ENCODE measurements at regions of chr2 and their contacts with region 1.

Region 1: GRCh38 chr2:127953128-127953718 is 67.5 kb upstream of the AMMECR1L start:
- DNase-seq: peak; percentile 73
- ATAC-seq: peak; percentile 98

Region 2: DNA sequence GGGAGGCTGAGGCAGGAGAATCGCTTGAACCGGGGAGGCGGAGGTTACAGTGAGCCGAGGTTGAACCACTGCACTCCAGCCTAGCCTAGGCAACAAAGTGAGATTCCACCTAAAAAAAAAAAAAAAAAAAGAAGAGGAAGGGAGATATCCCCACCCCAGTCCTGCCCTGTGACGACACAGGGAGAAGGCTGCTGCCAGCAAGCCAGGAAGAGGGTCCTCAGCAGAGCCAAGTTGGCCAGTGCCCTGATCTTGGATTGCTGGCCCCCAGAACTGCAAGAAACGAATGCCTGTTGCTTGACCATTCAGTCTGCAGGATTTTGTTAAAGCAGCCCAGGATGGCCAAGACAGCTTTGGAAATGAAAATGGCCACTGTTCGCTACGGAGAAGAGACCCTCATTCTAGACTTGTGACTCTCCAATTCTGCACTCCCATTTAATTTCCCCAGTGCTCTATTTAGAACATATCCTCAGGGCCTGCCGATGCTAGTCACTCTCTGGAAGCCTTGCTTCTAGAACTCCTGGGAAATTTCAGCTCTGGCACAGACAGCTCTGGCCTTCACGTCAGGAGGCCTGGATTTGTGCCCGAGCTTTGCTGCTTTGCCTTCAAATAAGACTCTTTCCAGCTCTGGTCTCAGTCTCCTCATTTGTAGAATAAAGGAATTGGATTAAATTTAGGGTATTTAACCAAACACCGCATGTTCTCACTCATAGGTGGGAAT is 51.7 kb before region 1 on chr2:
- intact Hi-C with region 1: loop called (anchors 5 kb)
- DNase-seq: peak; percentile 85
- ATAC-seq: peak; percentile 91

Region 3: GRCh38 chr2:127913808-127914457 is 39.3 kb before region 1 on chr2:
- intact Hi-C with region 1: no loop called
- DNase-seq: no peak
- ATAC-seq: no peak

Region 4: DNA sequence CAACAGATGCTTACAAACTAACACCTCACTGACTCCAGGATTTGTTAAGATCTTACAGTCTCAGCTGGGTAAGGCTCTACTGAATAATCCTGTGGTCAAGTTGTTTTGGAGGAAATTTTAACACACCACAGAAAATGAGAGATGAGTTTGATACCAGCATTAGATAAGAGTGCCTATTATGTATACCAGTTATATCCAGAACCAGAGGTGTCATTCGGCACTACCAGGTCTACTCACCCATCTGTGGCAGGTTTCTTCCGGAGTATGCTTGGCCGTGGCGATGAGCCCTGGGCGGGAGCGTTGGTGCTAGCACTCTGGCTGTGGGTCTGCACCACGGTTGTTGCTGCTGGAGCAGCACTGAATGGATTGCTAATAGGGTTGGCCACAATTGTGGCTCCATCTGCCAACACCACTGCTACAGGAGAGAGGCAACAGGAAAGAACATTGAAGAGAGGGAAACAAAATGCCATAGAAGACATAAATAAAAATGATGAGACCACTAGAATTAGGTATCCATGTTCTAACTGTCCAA is 33.4 kb after region 1 on chr2:
- intact Hi-C with region 1: loop called (anchors 5 kb)
- DNase-seq: no peak
- ATAC-seq: peak; percentile 63

Region 5: DNA sequence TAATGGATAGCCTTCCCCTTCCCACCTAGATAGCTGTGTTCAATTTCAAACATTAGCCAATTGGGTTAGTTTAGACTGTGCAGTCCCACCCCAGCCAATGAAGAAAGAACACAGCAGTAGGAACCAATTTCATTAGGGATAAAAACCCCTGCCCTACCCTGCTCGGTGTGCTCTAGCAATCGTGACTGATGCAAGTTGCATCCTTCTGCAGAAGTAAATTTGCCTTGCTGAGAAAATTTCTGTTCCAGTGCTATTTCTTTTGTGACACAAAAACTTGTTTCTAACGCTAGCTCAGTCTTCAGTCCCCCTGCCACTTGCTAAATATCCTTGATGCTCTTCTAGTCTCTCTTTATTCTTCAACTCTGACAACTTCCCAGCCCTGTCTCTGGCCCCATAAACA is 89.8 kb after region 1 on chr2:
- intact Hi-C with region 1: no loop called
- DNase-seq: no peak
- ATAC-seq: no peak